ENCODE measurements at regions of chr1 and their contacts with region 1.

Region 1: GRCh38 chr1:36187800-36188593 is 32.0 kb downstream of the MAP7D1 start:
- DNase-seq: peak; percentile 91
- H3K4me3 Mint-ChIP-seq: no peak overlapping the region
- H3K27ac Mint-ChIP-seq: peak overlapping the region; percentile 43
- H3K4me1 Mint-ChIP-seq: peaks cover 15% of the 10 kb centered on the region
- H3K27me3 Mint-ChIP-seq: no peaks in the 10 kb centered on the region
- CTCF ChIP-seq: peak; percentile 85

Region 2: GRCh38 chr1:36099681-36100341 is 88.2 kb before region 1 on chr1:
- CTCF ChIA-PET with region 1: interaction called, 16 read pairs
- POLR2A ChIA-PET with region 1: interaction called, 4 read pairs
- intact Hi-C with region 1: loop called (anchors 1 kb)
- DNase-seq: peak; percentile 77
- H3K4me3 Mint-ChIP-seq: no peak overlapping the region
- H3K27ac Mint-ChIP-seq: no peak overlapping the region
- H3K4me1 Mint-ChIP-seq: no peaks in the 10 kb centered on the region
- H3K27me3 Mint-ChIP-seq: no peaks in the 10 kb centered on the region
- CTCF ChIP-seq: peak; percentile 77

Region 3: GRCh38 chr1:36166938-36167910 is 20.8 kb before region 1 on chr1:
- CTCF ChIA-PET with region 1: interaction called, 83 read pairs
- POLR2A ChIA-PET with region 1: interaction called, 25 read pairs
- intact Hi-C with region 1: no loop called
- DNase-seq: no peak
- H3K4me3 Mint-ChIP-seq: no peak overlapping the region
- H3K27ac Mint-ChIP-seq: peak overlapping the region; percentile 35
- H3K4me1 Mint-ChIP-seq: peaks cover 47% of the 10 kb centered on the region
- H3K27me3 Mint-ChIP-seq: no peaks in the 10 kb centered on the region
- CTCF ChIP-seq: no peak

Region 4: GRCh38 chr1:36198641-36199040 is 10.6 kb after region 1 on chr1:
- CTCF ChIA-PET with region 1: interaction called, 21 read pairs
- POLR2A ChIA-PET with region 1: interaction called, 5 read pairs
- intact Hi-C with region 1: no loop called
- DNase-seq: no peak
- H3K4me3 Mint-ChIP-seq: no peak overlapping the region
- H3K27ac Mint-ChIP-seq: no peak overlapping the region
- H3K4me1 Mint-ChIP-seq: peaks cover 17% of the 10 kb centered on the region
- H3K27me3 Mint-ChIP-seq: no peaks in the 10 kb centered on the region
- CTCF ChIP-seq: no peak

Region 5: DNA sequence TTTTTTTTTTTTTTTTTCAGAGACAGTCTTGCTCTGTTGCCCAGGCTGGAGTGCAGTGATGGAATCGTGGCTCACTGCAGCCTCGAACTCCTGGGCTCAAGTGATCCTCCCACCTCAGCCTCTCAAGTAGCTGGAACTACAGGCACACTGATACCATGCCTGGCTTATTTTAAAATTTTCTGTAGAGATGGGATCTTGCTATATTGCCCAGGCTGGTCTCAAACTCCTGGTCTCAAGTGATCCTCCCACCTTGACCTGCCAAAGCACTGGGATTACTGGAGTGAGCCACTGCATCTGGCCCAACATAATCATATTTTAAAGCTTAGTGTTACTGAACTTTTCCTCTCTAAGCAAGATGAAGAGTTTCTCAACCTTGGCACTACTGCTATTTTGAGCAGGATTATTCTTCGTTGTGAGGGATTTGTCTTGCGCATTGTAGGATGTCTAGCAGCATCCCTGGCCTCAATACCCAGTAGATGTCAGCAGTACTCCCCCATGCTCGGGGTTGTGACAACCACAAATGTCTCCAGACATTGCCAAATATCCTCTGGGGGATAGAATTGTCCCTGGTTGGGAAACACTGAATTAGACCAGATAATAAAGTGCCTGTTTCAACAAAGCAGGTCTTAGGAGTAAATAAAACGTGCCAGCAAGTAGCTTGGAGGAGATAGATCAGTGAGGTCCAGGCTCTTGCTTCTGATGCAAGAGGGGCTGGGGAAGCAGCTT is 21.1 kb after region 1 on chr1:
- CTCF ChIA-PET with region 1: interaction called, 10 read pairs
- POLR2A ChIA-PET with region 1: no interaction called
- intact Hi-C with region 1: no loop called
- DNase-seq: no peak
- H3K4me3 Mint-ChIP-seq: no peak overlapping the region
- H3K27ac Mint-ChIP-seq: no peak overlapping the region
- H3K4me1 Mint-ChIP-seq: peaks cover 23% of the 10 kb centered on the region
- H3K27me3 Mint-ChIP-seq: no peaks in the 10 kb centered on the region
- CTCF ChIP-seq: no peak

Region 6: DNA sequence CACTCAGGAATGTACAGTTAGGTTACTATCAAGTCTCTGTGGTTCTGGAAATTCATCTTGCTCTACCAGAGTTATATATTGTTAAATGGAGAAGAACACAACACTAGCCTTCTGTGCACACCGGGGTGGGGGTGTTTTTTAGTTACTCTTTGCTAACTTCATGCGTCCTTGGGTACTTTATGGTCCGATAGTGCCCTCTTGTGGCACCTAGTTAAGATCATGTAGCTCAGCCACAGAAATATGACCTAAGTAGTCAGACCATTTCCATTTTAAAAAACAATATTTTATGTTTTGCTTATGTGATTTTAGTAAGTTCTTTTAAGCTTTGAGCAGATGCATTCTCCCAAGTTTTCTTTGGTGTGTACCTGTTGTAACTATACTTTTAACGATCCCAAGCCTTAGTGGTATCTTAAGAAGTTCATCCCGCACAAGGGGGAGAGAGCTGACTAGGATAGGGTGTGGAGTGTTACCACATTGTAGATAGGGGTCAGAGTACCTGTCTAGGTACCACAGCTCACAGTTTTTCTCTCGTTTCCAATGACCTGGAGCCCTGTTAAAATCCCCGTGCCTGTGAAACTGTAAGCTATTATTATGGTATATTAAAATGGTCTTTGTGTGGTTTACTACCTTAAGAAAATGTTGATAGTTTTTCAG is 97.6 kb after region 1 on chr1:
- CTCF ChIA-PET with region 1: interaction called, 33 read pairs
- POLR2A ChIA-PET with region 1: no interaction called
- intact Hi-C with region 1: loop called (anchors 1 kb)
- DNase-seq: peak; percentile 89
- H3K4me3 Mint-ChIP-seq: no peak overlapping the region
- H3K27ac Mint-ChIP-seq: no peak overlapping the region
- H3K4me1 Mint-ChIP-seq: peaks cover 7% of the 10 kb centered on the region
- H3K27me3 Mint-ChIP-seq: no peaks in the 10 kb centered on the region
- CTCF ChIP-seq: peak; percentile 67

Measured in MCF 10A (cell line).